Gastrocnemius medialis (tissue), 4 donors: ENCODE measurements at regions of chr7 and their contacts with region 1.

Region 1: GRCh38 chr7:148962823-148963582 is 65.3 kb downstream of the PDIA4 start:
- DNase-seq: peak; percentile 22 to 57
- ATAC-seq: peak; percentile 79 to 84
- H3K4me3 ChIP-seq: peak overlapping the region; percentile 51 to 72 (median 65)
- H3K27ac ChIP-seq: peak overlapping the region; percentile 65 to 78 (median 67)
- H3K4me1 ChIP-seq: peaks cover 9 to 14% of the 10 kb centered on the region in 2 donors
- H3K27me3 ChIP-seq: no peaks in the 10 kb centered on the region
- CTCF ChIP-seq: peak in 4 of 5 experiments; percentile 54 to 67 (median 61)
- POLR2A ChIP-seq: no peak

Region 2: DNA sequence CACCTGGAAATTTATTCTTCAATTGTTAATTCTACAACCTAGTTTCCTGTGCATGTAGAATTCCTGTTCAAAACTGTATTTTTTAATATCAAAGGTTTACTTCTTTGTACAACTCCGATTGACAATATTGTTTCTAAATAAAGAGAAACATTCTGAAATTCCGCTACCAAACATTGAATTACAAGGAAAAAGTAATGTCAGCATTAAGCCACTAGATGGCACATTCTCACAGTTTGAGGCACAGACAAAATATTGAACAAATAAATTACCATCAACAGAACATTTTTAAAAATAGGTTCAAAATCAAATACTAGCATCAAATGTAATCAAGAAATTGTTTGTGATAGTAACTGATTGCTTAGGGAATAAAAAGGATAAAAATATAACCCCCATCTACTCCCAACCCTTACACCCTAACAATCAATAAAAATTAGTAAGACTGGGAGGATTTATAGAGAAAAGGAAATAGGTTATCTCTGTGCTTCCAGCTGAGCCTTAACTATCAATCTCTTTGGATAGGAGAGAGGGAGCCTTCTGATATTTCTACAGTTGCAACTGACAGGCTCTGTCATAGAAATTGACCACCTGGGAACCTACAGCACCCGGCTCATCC is 459.0 kb before region 1 on chr7:
- in situ Hi-C with region 1: loop called (anchors 5 to 10 kb)
- intact Hi-C with region 1: loop called (anchors 2 kb)
- DNase-seq: no peak
- ATAC-seq: no peak
- H3K4me3 ChIP-seq: no peak overlapping the region
- H3K27ac ChIP-seq: no peak overlapping the region
- H3K4me1 ChIP-seq: no peaks in the 10 kb centered on the region
- H3K27me3 ChIP-seq: peaks cover 0 to 12% (median 0%) of the 10 kb centered on the region in 3 donors
- CTCF ChIP-seq: peak; percentile 36 to 78 (median 62)
- POLR2A ChIP-seq: no peak

Region 3: GRCh38 chr7:148575640-148576411 is 387.2 kb before region 1 on chr7:
- in situ Hi-C with region 1: loop called (anchors 5 to 10 kb)
- intact Hi-C with region 1: loop called (anchors 1 kb)
- DNase-seq: peak in 1 of 2 donors; percentile 40
- ATAC-seq: peak; percentile 54 to 85
- H3K4me3 ChIP-seq: no peak overlapping the region
- H3K27ac ChIP-seq: no peak overlapping the region
- H3K4me1 ChIP-seq: no peaks in the 10 kb centered on the region
- H3K27me3 ChIP-seq: no peaks in the 10 kb centered on the region
- CTCF ChIP-seq: peak; percentile 53 to 80 (median 74)
- POLR2A ChIP-seq: no peak

Region 4: GRCh38 chr7:148698397-148699023 is 264.5 kb before region 1 on chr7 and contains the start of gene CUL1:
- in situ Hi-C with region 1: loop called in 2 of 4 experiments (anchors 25 kb)
- intact Hi-C with region 1: loop called (anchors 5 kb)
- DNase-seq: peak; percentile 75 to 82
- ATAC-seq: peak; percentile 74 to 82
- H3K4me3 ChIP-seq: peak within 1 kb of the TSS; percentile 56 to 81 (median 72)
- H3K27ac ChIP-seq: peak within 1 kb of the TSS; percentile 85 to 96 (median 92)
- H3K4me1 ChIP-seq: peaks cover 34 to 35% of the 10 kb centered on the region in 2 donors
- H3K27me3 ChIP-seq: no peaks in the 10 kb centered on the region
- CTCF ChIP-seq: no peak
- POLR2A ChIP-seq: peak; percentile 68 to 72
- total RNA-seq, gene CUL1: 78.7 to 101 (median 84.6) TPM

Region 5: DNA sequence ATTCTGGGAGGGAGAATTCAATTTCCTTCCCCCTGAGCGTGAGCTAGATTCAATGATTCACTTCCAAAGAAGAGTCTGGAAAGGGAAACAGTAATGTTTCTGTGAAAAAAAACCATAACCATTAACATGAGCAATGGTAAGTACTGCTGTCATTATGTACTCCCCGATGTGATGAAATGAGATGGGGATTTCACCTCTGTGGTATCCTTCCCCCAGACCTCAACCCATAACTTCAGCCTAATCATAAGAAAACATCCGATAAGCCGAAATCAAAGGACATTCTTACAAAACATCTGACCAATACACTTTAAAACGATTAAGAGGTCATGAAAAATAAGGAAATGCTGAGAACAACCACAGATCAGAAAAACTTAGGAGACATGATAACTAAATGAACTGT is 106.1 kb before region 1 on chr7:
- in situ Hi-C with region 1: loop called in 2 of 4 experiments (anchors 10 to 25 kb)
- intact Hi-C with region 1: loop called (anchors 1 kb)
- DNase-seq: no peak
- ATAC-seq: no peak
- H3K4me3 ChIP-seq: no peak overlapping the region
- H3K27ac ChIP-seq: no peak overlapping the region
- H3K4me1 ChIP-seq: no peaks in the 10 kb centered on the region
- H3K27me3 ChIP-seq: no peaks in the 10 kb centered on the region
- CTCF ChIP-seq: no peak
- POLR2A ChIP-seq: no peak

Region 6: DNA sequence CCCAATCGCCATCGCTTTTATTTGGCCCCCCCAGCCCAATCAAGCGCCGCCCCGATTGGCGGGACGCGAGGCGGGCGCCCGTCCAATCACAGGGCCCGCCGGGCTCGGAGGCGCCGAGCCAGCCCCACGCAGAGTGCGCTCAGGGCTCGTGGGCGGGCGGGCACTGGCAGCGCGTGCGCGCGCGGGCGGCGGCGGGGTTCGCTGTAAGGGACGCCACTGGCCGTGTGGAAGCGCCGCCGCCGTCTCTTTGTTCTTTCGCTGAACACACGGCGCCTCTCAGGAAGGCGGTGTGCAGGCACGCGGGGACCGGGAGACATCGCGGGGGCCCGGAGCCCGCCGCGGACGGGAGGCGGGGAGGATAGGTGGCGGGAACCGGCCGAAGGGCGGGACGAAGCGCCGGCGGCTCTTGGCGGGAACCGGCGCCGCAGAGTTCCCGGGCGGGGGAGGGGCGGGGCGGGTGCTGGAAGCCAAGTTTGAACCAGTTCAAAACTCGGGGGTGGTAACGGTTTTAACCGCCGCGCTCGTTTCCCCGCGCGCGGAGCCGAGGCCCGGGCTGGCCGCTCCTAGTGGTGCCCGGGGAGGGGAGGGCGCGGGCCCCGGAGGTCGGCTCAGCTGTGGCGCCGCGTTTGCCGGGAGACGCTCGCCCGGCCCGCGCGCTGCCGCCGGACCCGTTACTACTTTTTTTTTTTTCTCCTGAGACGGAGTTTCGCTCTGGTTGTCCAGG is 78.5 kb before region 1 on chr7:
- in situ Hi-C with region 1: no loop called
- intact Hi-C with region 1: loop called (anchors 2 kb)
- DNase-seq: peak; percentile 88 to 92
- ATAC-seq: peak; percentile 91 to 93
- H3K4me3 ChIP-seq: peak overlapping the region; percentile 74 to 92 (median 85)
- H3K27ac ChIP-seq: peak overlapping the region; percentile 87 to 96 (median 92)
- H3K4me1 ChIP-seq: peaks cover 7 to 8% of the 10 kb centered on the region in 2 donors
- H3K27me3 ChIP-seq: peaks cover 0 to 3% (median 0%) of the 10 kb centered on the region in 3 donors
- CTCF ChIP-seq: no peak
- POLR2A ChIP-seq: peak; percentile 91 to 92

Region 7: GRCh38 chr7:148987010-148987750 is 24.2 kb after region 1 on chr7:
- in situ Hi-C with region 1: no loop called
- intact Hi-C with region 1: loop called (anchors 2 kb)
- DNase-seq: peak; percentile 73 to 76
- ATAC-seq: peak; percentile 92 to 94
- H3K4me3 ChIP-seq: peak overlapping the region; percentile 68 to 85 (median 70)
- H3K27ac ChIP-seq: peak overlapping the region; percentile 70 to 82 (median 76)
- H3K4me1 ChIP-seq: peaks cover 24 to 37% of the 10 kb centered on the region in 2 donors
- H3K27me3 ChIP-seq: no peaks in the 10 kb centered on the region
- CTCF ChIP-seq: no peak
- POLR2A ChIP-seq: no peak

Region 8: GRCh38 chr7:149005241-149006050 is 42.4 kb after region 1 on chr7:
- in situ Hi-C with region 1: no loop called
- intact Hi-C with region 1: no loop called
- DNase-seq: peak; percentile 59 to 72
- ATAC-seq: peak; percentile 82 to 94
- H3K4me3 ChIP-seq: no peak overlapping the region
- H3K27ac ChIP-seq: no peak overlapping the region
- H3K4me1 ChIP-seq: no peaks in the 10 kb centered on the region
- H3K27me3 ChIP-seq: no peaks in the 10 kb centered on the region
- CTCF ChIP-seq: peak; percentile 76 to 92 (median 87)
- POLR2A ChIP-seq: no peak